WTC11 (cell line): ENCODE measurements at regions of chr2 and their contacts with region 1.

Region 1: GRCh38 chr2:100603948-100604633 is 41.3 kb downstream of the PDCL3 start:
- DNase-seq: no peak
- ATAC-seq: peak; percentile 34
- H3K4me3 Mint-ChIP-seq: no peak overlapping the region
- H3K27ac Mint-ChIP-seq: no peak overlapping the region
- H3K4me1 Mint-ChIP-seq: peaks cover 21% of the 10 kb centered on the region
- H3K27me3 Mint-ChIP-seq: no peaks in the 10 kb centered on the region
- CTCF ChIP-seq: no peak

Region 2: DNA sequence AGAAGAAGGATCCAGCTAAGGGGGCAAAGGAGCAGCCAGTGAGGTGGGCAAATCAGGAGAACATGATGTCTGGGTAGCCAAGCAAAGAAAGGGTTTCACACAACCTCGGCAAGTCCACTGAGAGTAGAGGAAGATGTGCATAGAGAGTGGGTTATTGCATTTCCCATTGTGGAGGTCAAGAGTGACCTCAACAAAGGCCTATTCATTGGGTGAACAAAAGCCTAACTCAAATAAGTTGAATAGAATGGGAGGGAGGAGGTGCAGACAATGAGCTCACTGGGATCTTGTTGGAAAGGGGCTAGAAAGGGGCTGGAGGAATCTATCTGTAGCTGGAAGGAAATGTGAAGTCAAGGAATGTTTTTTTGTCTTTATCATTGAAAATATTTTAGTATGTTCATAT is 55.3 kb before region 1 on chr2:
- CTCF ChIA-PET with region 1: no interaction called
- POLR2A ChIA-PET with region 1: no interaction called
- DNase-seq: no peak
- ATAC-seq: no peak
- H3K4me3 Mint-ChIP-seq: no peak overlapping the region
- H3K27ac Mint-ChIP-seq: no peak overlapping the region
- H3K4me1 Mint-ChIP-seq: peaks cover 13% of the 10 kb centered on the region
- H3K27me3 Mint-ChIP-seq: no peaks in the 10 kb centered on the region
- CTCF ChIP-seq: no peak

Region 3: GRCh38 chr2:100589527-100589926 is 14.6 kb before region 1 on chr2:
- CTCF ChIA-PET with region 1: interaction called, 24 read pairs
- POLR2A ChIA-PET with region 1: no interaction called
- DNase-seq: no peak
- ATAC-seq: no peak
- H3K4me3 Mint-ChIP-seq: no peak overlapping the region
- H3K27ac Mint-ChIP-seq: no peak overlapping the region
- H3K4me1 Mint-ChIP-seq: no peaks in the 10 kb centered on the region
- H3K27me3 Mint-ChIP-seq: no peaks in the 10 kb centered on the region
- CTCF ChIP-seq: no peak

Region 4: GRCh38 chr2:100707016-100707947 is 103.2 kb after region 1 on chr2:
- CTCF ChIA-PET with region 1: no interaction called
- POLR2A ChIA-PET with region 1: no interaction called
- DNase-seq: no peak
- ATAC-seq: no peak
- H3K4me3 Mint-ChIP-seq: no peak overlapping the region
- H3K27ac Mint-ChIP-seq: no peak overlapping the region
- H3K4me1 Mint-ChIP-seq: peaks cover 18% of the 10 kb centered on the region
- H3K27me3 Mint-ChIP-seq: no peaks in the 10 kb centered on the region
- CTCF ChIP-seq: no peak

Region 5: GRCh38 chr2:100721693-100722092 is 117.6 kb after region 1 on chr2:
- CTCF ChIA-PET with region 1: no interaction called
- POLR2A ChIA-PET with region 1: no interaction called
- DNase-seq: no peak
- ATAC-seq: no peak
- H3K4me3 Mint-ChIP-seq: no peak overlapping the region
- H3K27ac Mint-ChIP-seq: no peak overlapping the region
- H3K4me1 Mint-ChIP-seq: peaks cover 6% of the 10 kb centered on the region
- H3K27me3 Mint-ChIP-seq: no peaks in the 10 kb centered on the region
- CTCF ChIP-seq: no peak